Calu3 (cell line): ENCODE measurements at regions of chr9 and their contacts with region 1.

Region 1: DNA sequence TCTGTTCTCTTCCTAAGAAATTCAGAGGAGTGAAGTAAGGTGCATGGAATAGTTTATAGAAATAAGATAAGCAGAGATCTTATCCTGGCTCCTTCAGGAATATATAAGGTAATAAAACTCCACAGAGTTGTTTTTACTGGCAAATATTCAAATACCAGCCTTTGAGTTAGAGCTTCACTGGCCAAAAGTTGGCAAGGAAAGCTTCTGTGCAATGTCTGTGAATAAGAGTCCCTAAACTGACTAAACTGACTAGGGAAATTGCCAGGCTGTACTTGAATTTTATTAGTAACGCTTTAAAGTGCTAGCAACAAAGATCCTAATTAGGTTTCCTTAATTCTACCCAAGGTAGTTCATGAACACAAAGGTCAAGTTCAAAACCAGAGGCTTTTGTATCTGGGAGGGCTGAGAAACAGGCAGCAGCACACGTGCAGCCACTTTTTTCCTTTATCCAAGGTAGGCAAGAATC is 131.1 kb upstream of the MPDZ start:
- DNase-seq: no peak
- H3K4me3 Mint-ChIP-seq: no peak overlapping the region
- H3K27ac Mint-ChIP-seq: no peak overlapping the region
- H3K4me1 Mint-ChIP-seq: no peaks in the 10 kb centered on the region
- H3K27me3 Mint-ChIP-seq: no peaks in the 10 kb centered on the region
- CTCF ChIP-seq: no peak

Region 2: DNA sequence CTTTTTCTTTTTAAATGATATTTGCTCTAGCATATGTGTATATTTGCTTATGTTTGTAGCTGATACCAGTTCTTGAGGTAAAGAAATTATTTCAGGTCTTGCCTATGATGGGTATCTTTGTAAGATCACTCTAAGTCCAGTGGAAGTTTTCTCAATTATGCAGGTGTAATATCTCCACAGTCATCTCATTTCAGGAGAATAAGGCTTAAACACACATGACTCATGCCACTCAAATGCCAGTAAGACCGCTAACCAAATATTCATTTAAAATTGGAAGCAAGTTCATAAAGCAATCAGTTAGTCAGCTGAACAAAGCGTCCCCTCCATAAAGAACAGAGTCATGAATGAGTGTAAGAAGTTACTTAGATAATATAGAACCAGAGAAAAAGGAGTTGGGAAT is 387.1 kb before region 1 on chr9:
- CTCF ChIA-PET with region 1: no interaction called
- intact Hi-C with region 1: loop called (anchors 10 kb)
- DNase-seq: no peak
- H3K4me3 Mint-ChIP-seq: no peak overlapping the region
- H3K27ac Mint-ChIP-seq: no peak overlapping the region
- H3K4me1 Mint-ChIP-seq: no peaks in the 10 kb centered on the region
- H3K27me3 Mint-ChIP-seq: peaks cover 40% of the 10 kb centered on the region
- CTCF ChIP-seq: no peak

Region 3: GRCh38 chr9:13263511-13263910 is 147.1 kb before region 1 on chr9:
- CTCF ChIA-PET with region 1: no interaction called
- intact Hi-C with region 1: no loop called
- DNase-seq: no peak
- H3K4me3 Mint-ChIP-seq: no peak overlapping the region
- H3K27ac Mint-ChIP-seq: no peak overlapping the region
- H3K4me1 Mint-ChIP-seq: peaks cover 5% of the 10 kb centered on the region
- H3K27me3 Mint-ChIP-seq: no peaks in the 10 kb centered on the region
- CTCF ChIP-seq: no peak